Mammary epithelial cell (primary cell): ENCODE measurements at regions of chrX and their contacts with region 1.

Region 1: GRCh38 chrX:830532-830931 is 199.9 kb downstream of the SHOX start:
- DNase-seq: no peak
- H3K4me3 ChIP-seq: no peak overlapping the region
- H3K27ac ChIP-seq: no peak overlapping the region
- H3K4me1 ChIP-seq: no peaks in the 10 kb centered on the region
- H3K27me3 ChIP-seq: no peaks in the 10 kb centered on the region
- CTCF ChIP-seq: no peak

Region 2: GRCh38 chrX:758917-759316 is 71.6 kb before region 1 on chrX:
- CTCF ChIA-PET with region 1: no interaction called
- dilution Hi-C with region 1: loop called (anchors 5 kb)
- in situ Hi-C with region 1: no loop called
- intact Hi-C with region 1: no loop called
- DNase-seq: no peak
- H3K4me3 ChIP-seq: no peak overlapping the region
- H3K27ac ChIP-seq: no peak overlapping the region
- H3K4me1 ChIP-seq: no peaks in the 10 kb centered on the region
- H3K27me3 ChIP-seq: no peaks in the 10 kb centered on the region
- CTCF ChIP-seq: no peak

Region 3: DNA sequence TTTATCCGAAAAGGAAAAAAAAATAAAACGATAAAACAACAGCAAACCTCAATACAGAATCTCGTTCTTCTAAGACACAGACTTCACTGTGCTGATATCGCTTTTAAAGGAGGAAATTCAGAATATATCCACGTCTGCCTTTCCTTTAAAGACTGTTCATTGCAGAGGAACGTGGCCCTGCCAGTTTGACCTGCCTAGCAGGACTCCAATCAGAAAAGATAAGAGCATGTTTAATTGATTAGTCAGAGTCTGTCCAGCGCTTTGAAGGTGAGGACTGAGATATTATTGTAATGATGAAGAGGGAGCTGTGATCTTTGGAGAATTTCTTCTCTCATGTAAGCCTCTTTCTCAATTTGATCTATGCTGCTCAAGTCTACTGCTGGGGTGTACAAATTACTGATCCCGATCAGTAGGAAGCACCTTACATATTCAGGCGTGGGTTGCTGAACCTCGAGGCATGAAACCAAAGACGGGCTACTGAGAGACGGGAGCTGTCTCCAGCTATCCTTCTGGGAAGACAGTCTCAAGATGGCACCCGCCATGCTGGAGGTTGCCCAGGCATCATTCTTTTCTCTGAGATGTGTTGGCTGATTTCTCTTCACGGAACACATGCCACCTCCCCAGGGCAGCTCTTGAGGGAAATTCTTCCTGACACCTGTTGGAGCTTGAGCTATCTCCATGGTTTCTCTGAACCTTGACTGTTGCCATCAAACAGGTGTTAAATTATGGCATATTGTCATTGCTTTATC is 53.8 kb before region 1 on chrX:
- CTCF ChIA-PET with region 1: no interaction called
- dilution Hi-C with region 1: no loop called
- in situ Hi-C with region 1: no loop called
- intact Hi-C with region 1: no loop called
- DNase-seq: no peak
- H3K4me3 ChIP-seq: no peak overlapping the region
- H3K27ac ChIP-seq: no peak overlapping the region
- H3K4me1 ChIP-seq: no peaks in the 10 kb centered on the region
- H3K27me3 ChIP-seq: no peaks in the 10 kb centered on the region
- CTCF ChIP-seq: no peak